ENCODE measurements at regions of chr6 and their contacts with region 1.

Region 1: GRCh38 chr6:30326526-30327260 is at the start of gene TRIM39:
- DNase-seq: peak; percentile 76 to 90 (median 77)
- H3K4me3 ChIP-seq: peak within 1 kb of the TSS; percentile 78 to 89 (median 82)
- H3K4me3 Mint-ChIP-seq: peak within 1 kb of the TSS; percentile 94 to 98
- H3K27ac ChIP-seq: peak within 1 kb of the TSS; percentile 86 to 94
- H3K27ac Mint-ChIP-seq: peak within 1 kb of the TSS; percentile 96 to 99 (median 99)
- H3K4me1 ChIP-seq: peaks cover 22 to 29% of the 10 kb centered on the region in 2 donors
- H3K4me1 Mint-ChIP-seq: peaks cover 49% of the 10 kb centered on the region
- H3K27me3 ChIP-seq: no peaks in the 10 kb centered on the region
- H3K27me3 Mint-ChIP-seq: no peaks in the 10 kb centered on the region
- CTCF ChIP-seq: no peak
- polyA plus RNA-seq, gene TRIM39: 3.5 to 16.3 (median 3.6) TPM

Region 2: DNA sequence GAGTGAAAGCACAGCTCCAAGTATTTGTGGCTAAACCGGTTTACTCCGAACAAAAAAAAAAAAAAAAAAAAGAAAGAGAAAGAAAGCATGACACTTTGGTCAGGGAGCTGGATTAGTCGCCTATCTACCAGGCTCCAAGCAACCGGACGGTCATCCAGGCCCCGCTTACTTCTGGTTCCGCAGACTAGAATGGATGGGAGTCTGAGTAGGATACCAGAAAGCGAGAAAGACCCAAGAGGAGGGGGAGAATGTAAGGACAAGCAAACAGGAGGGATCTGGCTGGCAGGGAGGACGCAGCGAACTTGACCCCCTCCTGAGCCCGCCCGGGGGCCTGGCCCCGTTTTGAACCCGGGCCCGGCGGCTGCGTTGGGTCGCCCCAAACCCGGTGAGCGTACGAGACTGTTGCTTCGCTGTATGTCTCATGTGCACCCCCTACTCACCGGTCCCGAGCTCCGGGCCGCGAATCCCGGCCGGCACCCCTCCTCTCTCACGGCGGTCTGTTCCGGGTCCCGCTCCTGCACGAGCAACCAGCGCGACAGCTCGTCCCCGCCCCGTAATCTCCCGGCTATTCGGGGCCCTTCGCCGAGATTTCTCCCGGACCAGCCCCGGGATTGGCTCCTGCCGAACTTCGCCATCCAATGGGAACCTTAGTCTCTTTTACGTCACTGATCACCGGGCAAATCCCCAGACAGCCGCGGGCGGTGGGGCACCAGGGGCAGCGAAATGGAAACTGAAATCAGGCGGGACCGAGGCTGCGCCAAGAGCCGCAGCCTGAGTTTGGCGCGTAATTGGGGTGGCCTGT is 113.6 kb before region 1 on chr6 and contains the start of gene TRIM26:
- intact Hi-C with region 1: loop called (anchors 5 kb)
- DNase-seq: peak; percentile 96
- H3K4me3 ChIP-seq: peak within 1 kb of the TSS; percentile 84 to 95 (median 88)
- H3K4me3 Mint-ChIP-seq: peak within 1 kb of the TSS; percentile 96 to 99
- H3K27ac ChIP-seq: peak within 1 kb of the TSS; percentile 94 to 95
- H3K27ac Mint-ChIP-seq: peak within 1 kb of the TSS; percentile 96 to 99 (median 99)
- H3K4me1 ChIP-seq: peaks cover 28 to 35% of the 10 kb centered on the region in 2 donors
- H3K4me1 Mint-ChIP-seq: peaks cover 44% of the 10 kb centered on the region
- H3K27me3 ChIP-seq: no peaks in the 10 kb centered on the region
- H3K27me3 Mint-ChIP-seq: peaks cover 0 to 2% (median 2%) of the 10 kb centered on the region in 3 donors
- CTCF ChIP-seq: no peak
- polyA plus RNA-seq, gene TRIM26: 16.4 to 26.4 (median 26.0) TPM

Region 3: GRCh38 chr6:30259140-30260035 is 67.3 kb before region 1 on chr6:
- intact Hi-C with region 1: loop called in 1 of 2 experiments (anchors 5 kb)
- DNase-seq: peak; percentile 80 to 97 (median 84)
- H3K4me3 ChIP-seq: peak overlapping the region; percentile 60 to 87 (median 81)
- H3K4me3 Mint-ChIP-seq: peak overlapping the region; percentile 90 to 92
- H3K27ac ChIP-seq: peak overlapping the region in 1 of 2 donors; percentile 70
- H3K27ac Mint-ChIP-seq: peak overlapping the region; percentile 47 to 91 (median 82)
- H3K4me1 ChIP-seq: peaks cover 8 to 11% of the 10 kb centered on the region in 2 donors
- H3K4me1 Mint-ChIP-seq: peaks cover 14% of the 10 kb centered on the region
- H3K27me3 ChIP-seq: peaks cover 15 to 18% of the 10 kb centered on the region in 2 donors
- H3K27me3 Mint-ChIP-seq: peaks cover 30 to 48% (median 45%) of the 10 kb centered on the region in 3 donors
- CTCF ChIP-seq: peak; percentile 27

Measured in CD14-positive monocyte (primary cell).